MCF 10A (cell line): ENCODE measurements at regions of chr4 and their contacts with region 1.

Region 1: DNA sequence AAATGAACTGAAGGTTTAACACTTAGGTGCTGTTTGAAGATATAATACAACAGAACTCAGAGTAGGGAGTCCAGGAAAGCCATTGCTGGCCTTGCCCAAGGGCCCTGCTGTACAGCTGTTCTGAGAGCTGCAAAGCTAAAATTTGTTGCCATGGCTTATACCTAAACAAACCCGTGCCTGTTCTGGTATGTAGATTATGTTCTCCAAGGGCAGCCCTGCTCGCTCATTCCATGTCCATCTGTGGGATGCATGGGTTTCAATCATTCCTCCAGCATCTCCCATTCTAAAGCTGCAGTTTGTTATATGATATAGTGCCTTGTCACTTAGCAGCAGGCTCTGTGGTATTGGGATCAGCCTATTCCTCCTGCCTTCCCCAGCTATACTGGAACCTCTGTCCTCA is 80.8 kb upstream of the BMPR1B start:
- DNase-seq: no peak
- H3K4me3 Mint-ChIP-seq: no peak overlapping the region
- H3K27ac Mint-ChIP-seq: no peak overlapping the region
- H3K4me1 Mint-ChIP-seq: peaks cover 7% of the 10 kb centered on the region
- H3K27me3 Mint-ChIP-seq: no peaks in the 10 kb centered on the region
- CTCF ChIP-seq: no peak

Region 2: GRCh38 chr4:94701631-94702300 is 24.8 kb after region 1 on chr4:
- CTCF ChIA-PET with region 1: interaction called, 10 read pairs
- POLR2A ChIA-PET with region 1: no interaction called
- intact Hi-C with region 1: no loop called
- DNase-seq: no peak
- H3K4me3 Mint-ChIP-seq: no peak overlapping the region
- H3K27ac Mint-ChIP-seq: no peak overlapping the region
- H3K4me1 Mint-ChIP-seq: no peaks in the 10 kb centered on the region
- H3K27me3 Mint-ChIP-seq: no peaks in the 10 kb centered on the region
- CTCF ChIP-seq: no peak

Region 3: DNA sequence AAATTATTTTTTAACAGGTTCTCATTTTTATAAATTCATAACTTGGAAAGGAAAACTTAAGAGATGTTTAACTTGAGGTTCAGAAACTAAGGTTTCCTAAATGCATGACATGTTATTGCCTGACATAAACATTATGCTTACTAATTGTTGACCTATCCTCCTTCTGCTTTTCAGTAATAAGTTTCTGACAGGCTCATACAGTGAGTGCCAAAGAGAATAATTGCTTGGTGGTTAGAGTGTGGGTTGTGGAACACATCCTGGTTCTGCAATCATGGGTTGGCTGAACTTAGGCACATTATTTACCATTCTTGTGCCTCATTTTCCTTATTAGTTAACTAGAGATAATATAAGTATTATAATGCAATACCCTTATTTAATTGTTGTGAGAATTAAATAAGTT is 137.3 kb after region 1 on chr4:
- CTCF ChIA-PET with region 1: no interaction called
- POLR2A ChIA-PET with region 1: no interaction called
- intact Hi-C with region 1: no loop called
- DNase-seq: no peak
- H3K4me3 Mint-ChIP-seq: no peak overlapping the region
- H3K27ac Mint-ChIP-seq: no peak overlapping the region
- H3K4me1 Mint-ChIP-seq: peaks cover 18% of the 10 kb centered on the region
- H3K27me3 Mint-ChIP-seq: no peaks in the 10 kb centered on the region
- CTCF ChIP-seq: no peak

Region 4: DNA sequence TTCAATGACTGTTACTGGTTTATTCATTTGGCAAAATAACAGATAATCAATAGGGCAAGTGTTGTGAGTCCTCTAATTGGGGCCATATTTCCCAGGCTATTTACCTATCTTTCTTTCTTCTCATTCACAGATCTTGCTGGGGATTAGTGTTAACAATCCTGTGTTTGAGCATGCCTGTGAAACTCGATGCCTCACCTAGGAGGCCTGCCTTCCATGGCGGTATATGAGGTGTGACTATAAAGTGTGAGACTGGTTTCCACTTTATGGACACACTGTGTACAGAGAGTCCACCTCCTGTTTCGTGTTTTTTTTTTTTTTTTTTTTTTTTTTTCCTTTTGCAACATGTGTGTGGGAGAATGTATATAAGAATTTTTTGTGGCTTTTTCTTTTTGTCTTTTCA is 280.1 kb after region 1 on chr4:
- CTCF ChIA-PET with region 1: no interaction called
- POLR2A ChIA-PET with region 1: no interaction called
- intact Hi-C with region 1: no loop called
- DNase-seq: no peak
- H3K4me3 Mint-ChIP-seq: no peak overlapping the region
- H3K27ac Mint-ChIP-seq: no peak overlapping the region
- H3K4me1 Mint-ChIP-seq: peaks cover 5% of the 10 kb centered on the region
- H3K27me3 Mint-ChIP-seq: no peaks in the 10 kb centered on the region
- CTCF ChIP-seq: no peak